Activated CD8-positive, alpha-beta T cell treated with anti-CD3 and anti-CD28 coated beads for 36 hours (primary cell): ENCODE measurements at regions of chr3 and their contacts with region 1.

Region 1: DNA sequence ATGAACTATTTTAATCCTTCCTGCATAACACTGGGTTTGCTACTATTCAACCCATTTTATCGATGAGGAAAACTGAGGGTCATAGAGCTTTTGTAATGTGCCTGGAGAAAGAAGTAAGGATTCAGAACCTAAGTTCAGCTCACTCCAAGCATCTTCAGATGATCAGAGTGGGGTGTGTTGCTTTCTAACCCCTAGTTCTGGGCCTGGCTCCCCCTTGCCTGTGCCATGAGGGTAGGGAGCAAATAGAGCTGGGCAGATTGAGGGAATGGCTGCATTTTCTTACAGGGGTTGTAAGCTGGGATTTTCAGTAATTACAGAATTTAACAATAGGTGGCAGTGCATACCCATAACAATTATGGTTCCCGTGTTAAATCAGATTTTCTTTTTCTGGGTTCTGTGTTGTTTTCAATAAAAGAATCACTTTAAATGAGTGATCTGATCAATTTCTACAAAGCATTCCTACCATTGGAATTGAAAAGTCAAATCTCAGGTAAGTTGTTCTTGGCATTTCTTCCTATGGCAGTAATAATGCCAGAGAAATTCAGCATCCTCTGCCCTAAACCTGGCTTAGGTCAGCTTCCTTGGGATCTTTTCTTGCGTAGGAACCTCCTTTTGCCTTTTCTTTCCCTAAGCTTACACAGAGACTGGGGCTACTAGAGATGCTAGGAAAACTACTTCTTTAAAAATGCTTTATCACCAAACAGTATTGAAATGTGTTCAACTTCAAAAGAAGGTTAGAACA is 103.8 kb upstream of the IL12A start:
- DNase-seq: no peak
- ATAC-seq: peak; percentile 51
- H3K4me3 Mint-ChIP-seq: no peak overlapping the region
- H3K27ac Mint-ChIP-seq: no peak overlapping the region
- H3K4me1 Mint-ChIP-seq: no peaks in the 10 kb centered on the region
- H3K27me3 Mint-ChIP-seq: peaks cover 4% of the 10 kb centered on the region
- CTCF ChIP-seq: peak; percentile 73

Region 2: DNA sequence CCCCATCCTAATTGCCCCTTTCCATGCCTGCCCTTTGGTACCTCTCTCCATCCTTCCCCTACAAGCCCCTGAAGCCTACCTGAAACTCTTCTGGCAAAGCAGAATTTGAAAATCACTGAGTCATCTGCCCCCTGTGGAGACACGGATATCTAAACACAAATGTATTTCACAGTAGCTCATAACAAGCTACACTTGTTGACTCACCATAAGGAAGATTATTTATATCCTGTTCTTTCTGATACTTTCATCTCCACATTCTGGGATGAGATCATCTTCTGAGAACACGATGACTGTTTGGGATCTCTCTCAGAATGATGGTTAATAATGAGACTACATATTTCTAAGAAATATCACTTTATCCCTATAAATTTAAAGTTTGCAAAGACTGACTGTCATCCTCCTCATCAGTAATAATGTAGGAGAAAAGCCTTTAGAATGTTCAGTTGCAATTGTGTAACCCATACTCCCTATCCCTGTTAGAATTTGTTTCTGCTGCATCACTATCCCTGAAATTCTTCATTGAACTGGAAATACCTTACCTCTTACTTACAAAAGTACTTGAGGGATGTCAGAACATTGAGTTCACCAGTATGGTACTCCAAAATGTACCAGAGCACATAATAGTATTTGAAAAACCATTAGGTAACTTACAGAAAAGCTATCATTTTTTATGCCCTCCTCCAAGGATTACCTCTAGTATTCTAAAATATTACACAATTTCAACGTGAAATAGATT is 12.3 kb before region 1 on chr3:
- CTCF ChIA-PET with region 1: interaction called, 39 read pairs
- POLR2A ChIA-PET with region 1: no interaction called
- intact Hi-C with region 1: no loop called
- DNase-seq: no peak
- ATAC-seq: no peak
- H3K4me3 Mint-ChIP-seq: no peak overlapping the region
- H3K27ac Mint-ChIP-seq: no peak overlapping the region
- H3K4me1 Mint-ChIP-seq: no peaks in the 10 kb centered on the region
- H3K27me3 Mint-ChIP-seq: peaks cover 7% of the 10 kb centered on the region
- CTCF ChIP-seq: no peak

Region 3: DNA sequence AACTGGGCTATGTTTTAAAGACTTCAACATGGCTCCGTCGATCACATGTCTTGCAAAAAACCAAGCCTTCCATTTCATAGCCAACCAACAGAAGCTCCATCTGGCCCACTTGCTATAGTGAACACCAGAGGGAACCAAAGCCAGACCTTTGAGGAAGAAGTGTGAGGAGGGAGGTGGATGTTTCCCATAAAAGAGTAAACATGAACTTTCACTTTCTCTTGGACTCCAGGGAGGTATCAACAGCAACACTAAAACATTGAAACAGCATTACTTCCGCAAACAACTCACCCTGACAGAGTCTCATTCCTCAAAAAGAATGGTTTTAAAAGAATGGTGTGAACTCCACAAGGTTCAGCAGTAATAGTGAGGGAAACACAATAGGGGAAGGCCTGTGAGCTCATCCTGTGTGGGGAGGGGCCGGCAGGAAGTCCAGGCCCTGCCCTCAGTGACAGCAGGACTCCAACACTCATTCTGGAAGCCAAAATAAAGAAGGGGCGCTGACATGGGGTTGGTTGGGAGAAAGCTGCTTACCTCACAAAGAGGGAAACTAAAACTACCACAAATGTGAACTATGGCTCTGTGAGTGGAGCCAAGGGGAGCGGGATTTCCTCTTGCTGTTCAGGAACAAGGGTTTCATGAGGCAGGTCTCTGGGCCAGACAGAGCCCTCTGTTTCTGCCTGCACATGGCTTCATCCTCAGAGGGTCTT is 44.8 kb after region 1 on chr3:
- CTCF ChIA-PET with region 1: no interaction called
- POLR2A ChIA-PET with region 1: no interaction called
- intact Hi-C with region 1: no loop called
- DNase-seq: no peak
- ATAC-seq: peak; percentile 53
- H3K4me3 Mint-ChIP-seq: no peak overlapping the region
- H3K27ac Mint-ChIP-seq: no peak overlapping the region
- H3K4me1 Mint-ChIP-seq: no peaks in the 10 kb centered on the region
- H3K27me3 Mint-ChIP-seq: no peaks in the 10 kb centered on the region
- CTCF ChIP-seq: no peak

Region 4: GRCh38 chr3:159988617-159989271 is 103.9 kb after region 1 on chr3 and contains the start of gene IL12A:
- CTCF ChIA-PET with region 1: interaction called, 30 read pairs
- POLR2A ChIA-PET with region 1: no interaction called
- intact Hi-C with region 1: no loop called
- DNase-seq: peak; percentile 88
- ATAC-seq: peak; percentile 95
- H3K4me3 Mint-ChIP-seq: peak within 1 kb of the TSS; percentile 44
- H3K27ac Mint-ChIP-seq: peak within 1 kb of the TSS; percentile 41
- H3K4me1 Mint-ChIP-seq: peaks cover 22% of the 10 kb centered on the region
- H3K27me3 Mint-ChIP-seq: no peaks in the 10 kb centered on the region
- CTCF ChIP-seq: peak; percentile 96
- total RNA-seq, gene IL12A: not detected

Region 5: GRCh38 chr3:160003520-160004128 is 118.8 kb after region 1 on chr3:
- CTCF ChIA-PET with region 1: interaction called, 105 read pairs
- POLR2A ChIA-PET with region 1: no interaction called
- intact Hi-C with region 1: loop called (anchors 2 kb)
- DNase-seq: peak; percentile 68
- ATAC-seq: peak; percentile 80
- H3K4me3 Mint-ChIP-seq: no peak overlapping the region
- H3K27ac Mint-ChIP-seq: no peak overlapping the region
- H3K4me1 Mint-ChIP-seq: no peaks in the 10 kb centered on the region
- H3K27me3 Mint-ChIP-seq: no peaks in the 10 kb centered on the region
- CTCF ChIP-seq: peak; percentile 58

Region 6: DNA sequence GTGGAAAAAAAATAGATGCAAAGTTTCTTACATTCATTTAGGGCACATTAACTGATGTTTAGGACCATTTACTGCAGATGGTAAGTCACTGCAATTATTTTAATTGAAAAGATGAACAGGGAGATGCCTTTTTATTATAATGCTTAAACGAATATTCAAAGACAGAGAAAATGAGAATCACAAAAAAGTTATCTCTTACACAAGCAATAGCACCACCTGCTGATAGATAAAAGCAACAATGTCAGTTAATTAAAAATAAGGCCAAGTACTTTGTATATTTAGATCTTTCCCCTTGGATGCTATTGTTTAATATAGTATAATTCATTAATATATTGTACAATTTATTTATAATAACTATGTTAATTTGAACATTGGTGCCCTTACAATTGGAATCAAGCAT is 458.3 kb after region 1 on chr3:
- CTCF ChIA-PET with region 1: interaction called, 4 read pairs
- POLR2A ChIA-PET with region 1: no interaction called
- intact Hi-C with region 1: loop called (anchors 10 kb)
- DNase-seq: no peak
- ATAC-seq: no peak
- H3K4me3 Mint-ChIP-seq: no peak overlapping the region
- H3K27ac Mint-ChIP-seq: no peak overlapping the region
- H3K4me1 Mint-ChIP-seq: no peaks in the 10 kb centered on the region
- H3K27me3 Mint-ChIP-seq: no peaks in the 10 kb centered on the region
- CTCF ChIP-seq: peak; percentile 43

Region 7: GRCh38 chr3:160486459-160486869 is 601.6 kb after region 1 on chr3:
- CTCF ChIA-PET with region 1: interaction called, 5 read pairs
- POLR2A ChIA-PET with region 1: no interaction called
- intact Hi-C with region 1: loop called (anchors 10 kb)
- DNase-seq: peak; percentile 26
- ATAC-seq: no peak
- H3K4me3 Mint-ChIP-seq: no peak overlapping the region
- H3K27ac Mint-ChIP-seq: no peak overlapping the region
- H3K4me1 Mint-ChIP-seq: peaks cover 3% of the 10 kb centered on the region
- H3K27me3 Mint-ChIP-seq: peaks cover 1% of the 10 kb centered on the region
- CTCF ChIP-seq: peak; percentile 66